ENCODE measurements at regions of chr21 and their contacts with region 1.

Region 1: GRCh38 chr21:17679002-17679600 is 66.4 kb upstream of the BTG3 start:
- DNase-seq: peak; percentile 37
- H3K4me3 ChIP-seq: no peak overlapping the region
- H3K27ac ChIP-seq: no peak overlapping the region
- H3K27me3 ChIP-seq: no peaks in the 10 kb centered on the region
- CTCF ChIP-seq: peak; percentile 83

Region 2: DNA sequence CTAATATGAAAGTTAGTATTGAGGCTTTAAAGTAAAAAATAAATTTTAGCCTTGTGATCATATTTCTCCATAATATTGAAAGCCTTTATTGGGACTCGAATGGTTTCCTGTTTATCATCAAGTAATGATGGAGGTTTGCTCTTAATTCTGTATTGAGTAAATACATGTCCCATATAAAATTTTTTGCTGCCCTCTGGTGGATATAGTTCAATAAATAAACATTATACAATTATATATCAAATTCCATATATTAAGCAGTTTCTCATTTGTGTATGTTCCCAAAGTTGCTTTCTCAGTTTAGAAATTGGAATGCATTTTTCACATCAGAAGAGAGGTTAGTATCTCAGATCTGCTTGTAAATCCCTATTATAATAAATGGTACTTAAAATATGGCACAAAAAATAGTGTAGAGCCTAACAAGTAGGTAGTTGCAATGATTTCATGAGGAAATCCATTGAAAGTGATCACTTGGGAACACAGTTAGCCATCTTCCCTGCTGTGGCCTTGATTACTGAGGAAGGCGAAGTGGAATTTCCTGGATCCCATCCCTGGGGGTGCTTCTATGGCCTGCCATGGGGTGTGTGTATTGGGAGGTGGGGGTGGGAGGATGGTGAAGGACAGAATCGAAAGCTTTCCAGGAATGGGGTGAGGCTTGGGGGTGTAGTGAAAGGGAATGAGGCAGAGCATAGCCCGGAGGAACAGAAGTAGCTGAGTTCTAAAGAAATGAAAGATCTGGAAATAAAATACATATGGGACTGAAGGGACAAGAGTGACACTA is 224.1 kb after region 1 on chr21:
- CTCF ChIA-PET with region 1: interaction called, 56 read pairs
- POLR2A ChIA-PET with region 1: no interaction called
- DNase-seq: peak; percentile 20
- H3K4me3 ChIP-seq: no peak overlapping the region
- H3K27ac ChIP-seq: no peak overlapping the region
- H3K27me3 ChIP-seq: no peaks in the 10 kb centered on the region
- CTCF ChIP-seq: peak; percentile 19

Measured in AG04450 (cell line).